ENCODE measurements at regions of chr6 and their contacts with region 1.

Region 1: DNA sequence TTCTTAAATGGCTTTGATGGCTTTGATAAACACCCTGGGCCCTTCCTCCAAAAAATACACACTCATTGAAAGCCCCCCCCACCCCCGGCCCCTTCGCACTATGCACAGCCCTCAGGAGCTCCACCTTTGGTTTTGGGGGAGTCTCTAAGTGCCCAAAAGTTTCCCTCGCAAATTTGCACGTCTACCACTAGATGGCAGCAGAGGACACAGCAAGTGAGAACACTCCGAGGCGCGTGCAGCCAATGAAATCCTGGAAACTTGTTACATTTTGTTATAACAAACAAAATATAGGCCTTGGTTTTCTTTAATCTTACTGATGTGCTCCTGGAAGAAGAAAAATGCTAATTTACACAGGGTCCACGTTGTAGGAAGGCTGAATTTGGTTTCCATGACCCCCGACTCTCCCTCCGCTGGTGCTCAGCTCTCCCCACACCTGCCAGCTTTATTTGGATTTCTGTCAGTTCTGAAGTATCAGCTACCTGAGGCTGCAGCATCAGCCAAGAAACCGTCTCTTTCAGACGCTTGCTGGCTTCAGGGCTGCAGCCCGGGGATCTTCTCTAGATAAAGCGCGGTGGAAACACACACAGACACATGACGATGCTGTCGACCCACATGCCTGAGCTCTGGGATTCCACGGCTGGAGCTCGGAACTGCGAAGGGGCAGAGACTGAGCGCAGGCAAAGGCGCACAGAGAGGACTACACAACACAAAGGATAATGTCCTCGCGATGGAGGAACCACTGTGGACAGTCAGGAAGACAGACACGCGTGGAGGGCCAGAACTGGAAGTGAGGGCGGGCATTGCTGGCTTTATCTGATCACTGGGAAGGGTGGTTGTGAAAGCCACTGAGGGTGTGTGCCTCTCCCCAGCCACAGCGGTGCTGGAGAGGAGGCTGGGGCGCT is 148.4 kb upstream of the RPS6KA2 start:
- DNase-seq: peak; percentile 51
- ATAC-seq: peak; percentile 85
- H3K4me3 ChIP-seq: no peak overlapping the region
- H3K27ac ChIP-seq: no peak overlapping the region
- H3K4me1 ChIP-seq: peaks cover 0 to 15% of the 10 kb centered on the region in 2 experiments; a peak in 1 of 4 replicates
- H3K27me3 ChIP-seq: no peaks in the 10 kb centered on the region
- CTCF ChIP-seq: peak; percentile 83 to 88 (median 86)
- POLR2A ChIP-seq: no peak
- RAD21 ChIP-seq: peak; percentile 92

Region 2: DNA sequence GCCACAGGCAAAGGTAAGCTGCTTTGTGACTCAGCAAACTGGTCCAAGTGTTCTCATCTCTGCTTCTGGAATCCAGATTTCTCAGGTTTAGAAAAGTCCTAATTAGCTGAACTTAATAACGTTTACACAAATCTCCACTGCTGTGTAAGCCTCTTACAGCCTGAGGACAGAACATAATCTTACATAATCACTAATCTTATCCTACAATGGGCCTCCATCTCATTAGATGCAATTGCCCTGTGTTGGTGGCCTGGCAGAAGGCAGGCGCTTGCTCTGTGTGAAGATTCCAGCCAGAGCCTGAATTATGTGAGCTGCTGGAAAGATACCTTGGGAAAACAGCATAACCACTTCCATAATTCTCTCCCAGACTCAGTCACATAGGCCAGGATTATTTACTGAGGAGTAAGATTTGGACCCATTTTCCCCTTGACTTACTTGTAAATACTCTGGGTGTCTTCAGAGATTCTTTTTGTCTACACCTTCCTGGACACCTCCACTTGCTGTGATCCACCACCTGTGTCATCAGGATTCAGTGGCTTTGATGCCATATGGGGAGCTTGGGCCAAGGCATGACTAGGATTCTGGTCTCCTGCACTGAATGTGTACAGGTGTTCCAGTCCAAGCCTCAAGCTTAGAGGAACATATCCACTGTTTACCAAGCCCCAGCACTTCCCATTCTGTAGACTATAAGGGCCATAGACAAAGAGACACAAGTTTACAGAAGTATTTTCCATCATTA is 1570.5 kb before region 1 on chr6:
- CTCF ChIA-PET with region 1: no interaction called
- POLR2A ChIA-PET with region 1: no interaction called
- RAD21 ChIA-PET with region 1: no interaction called
- intact Hi-C with region 1: no loop called
- DNase-seq: no peak
- ATAC-seq: no peak
- H3K4me3 ChIP-seq: no peak overlapping the region
- H3K27ac ChIP-seq: no peak overlapping the region
- H3K4me1 ChIP-seq: no peaks in the 10 kb centered on the region
- H3K27me3 ChIP-seq: no peaks in the 10 kb centered on the region
- CTCF ChIP-seq: no peak
- POLR2A ChIP-seq: no peak
- RAD21 ChIP-seq: no peak

Region 3: DNA sequence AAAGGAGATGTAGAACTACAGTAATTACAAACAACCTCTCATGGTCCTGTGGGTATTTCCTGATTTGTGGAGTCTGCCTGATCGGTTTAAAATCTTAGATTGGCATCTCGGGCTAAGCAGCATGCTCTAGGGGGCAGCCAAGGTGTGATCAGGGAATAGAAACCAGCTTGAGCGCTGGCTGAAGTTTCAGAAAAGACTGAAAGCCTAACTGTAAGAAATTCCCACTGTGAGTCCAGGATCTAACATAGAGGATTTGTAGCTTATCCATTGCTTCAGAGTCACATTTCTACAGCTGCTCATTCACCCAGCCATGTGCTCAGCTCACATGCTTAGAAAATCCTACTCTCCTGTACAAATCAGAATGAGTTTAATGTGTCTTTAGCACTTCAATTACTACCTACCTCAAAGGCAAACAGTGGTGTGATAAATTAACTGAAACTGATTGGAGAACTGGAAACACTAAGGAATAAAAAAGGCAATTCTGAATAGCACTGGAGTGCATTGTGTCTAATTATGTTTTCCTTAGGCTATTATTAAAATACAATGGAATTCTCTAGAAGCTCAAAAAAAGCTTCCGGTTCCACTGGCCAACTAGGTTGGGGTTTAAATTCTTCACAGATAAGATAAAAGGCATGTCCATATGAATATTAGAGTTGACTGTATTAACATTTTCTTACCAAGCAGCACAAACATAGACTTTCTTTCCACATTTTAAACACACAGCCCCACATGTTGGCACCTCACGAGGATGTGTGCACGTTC is 318.9 kb before region 1 on chr6:
- CTCF ChIA-PET with region 1: no interaction called
- POLR2A ChIA-PET with region 1: no interaction called
- RAD21 ChIA-PET with region 1: no interaction called
- intact Hi-C with region 1: loop called (anchors 10 kb)
- DNase-seq: no peak
- ATAC-seq: peak; percentile 74
- H3K4me3 ChIP-seq: no peak overlapping the region
- H3K27ac ChIP-seq: no peak overlapping the region
- H3K4me1 ChIP-seq: no peaks in the 10 kb centered on the region
- H3K27me3 ChIP-seq: no peaks in the 10 kb centered on the region
- CTCF ChIP-seq: peak; percentile 34 to 41 (median 40); a peak in 4 of 6 replicates
- POLR2A ChIP-seq: no peak
- RAD21 ChIP-seq: peak; percentile 68

Region 4: GRCh38 chr6:166515072-166515810 is 260.2 kb before region 1 on chr6:
- CTCF ChIA-PET with region 1: interaction called, 3 read pairs
- POLR2A ChIA-PET with region 1: no interaction called
- RAD21 ChIA-PET with region 1: no interaction called
- intact Hi-C with region 1: loop called (anchors 5 kb)
- DNase-seq: peak; percentile 55
- ATAC-seq: peak; percentile 82
- H3K4me3 ChIP-seq: no peak overlapping the region
- H3K27ac ChIP-seq: no peak overlapping the region
- H3K4me1 ChIP-seq: peaks cover 9 to 23% of the 10 kb centered on the region in 2 experiments
- H3K27me3 ChIP-seq: no peaks in the 10 kb centered on the region
- CTCF ChIP-seq: peak; percentile 48 to 57 (median 50); a peak in 5 of 6 replicates
- POLR2A ChIP-seq: no peak
- RAD21 ChIP-seq: peak; percentile 71

Region 5: GRCh38 chr6:166950443-166950821 is 175.0 kb after region 1 on chr6:
- CTCF ChIA-PET with region 1: interaction called, 21 read pairs
- POLR2A ChIA-PET with region 1: no interaction called
- RAD21 ChIA-PET with region 1: interaction called in 1 of 2 experiments, 6 read pairs
- intact Hi-C with region 1: loop called (anchors 1 kb)
- DNase-seq: no peak
- ATAC-seq: no peak
- H3K4me3 ChIP-seq: no peak overlapping the region
- H3K27ac ChIP-seq: no peak overlapping the region
- H3K4me1 ChIP-seq: peaks cover 0 to 10% of the 10 kb centered on the region in 2 experiments; a peak in 1 of 4 replicates
- H3K27me3 ChIP-seq: no peaks in the 10 kb centered on the region
- CTCF ChIP-seq: no peak
- POLR2A ChIP-seq: no peak
- RAD21 ChIP-seq: no peak

Region 6: GRCh38 chr6:166989427-166990032 is 214.1 kb after region 1 on chr6:
- CTCF ChIA-PET with region 1: interaction called, 25 read pairs
- POLR2A ChIA-PET with region 1: interaction called, 4 read pairs
- RAD21 ChIA-PET with region 1: interaction called, 4 to 6 read pairs
- intact Hi-C with region 1: loop called (anchors 2 kb)
- DNase-seq: no peak
- ATAC-seq: peak; percentile 82
- H3K4me3 ChIP-seq: no peak overlapping the region
- H3K27ac ChIP-seq: no peak overlapping the region
- H3K4me1 ChIP-seq: no peaks in the 10 kb centered on the region
- H3K27me3 ChIP-seq: no peaks in the 10 kb centered on the region
- CTCF ChIP-seq: peak; percentile 38 to 57 (median 48); a peak in 5 of 6 replicates
- POLR2A ChIP-seq: no peak
- RAD21 ChIP-seq: peak; percentile 67

Region 7: DNA sequence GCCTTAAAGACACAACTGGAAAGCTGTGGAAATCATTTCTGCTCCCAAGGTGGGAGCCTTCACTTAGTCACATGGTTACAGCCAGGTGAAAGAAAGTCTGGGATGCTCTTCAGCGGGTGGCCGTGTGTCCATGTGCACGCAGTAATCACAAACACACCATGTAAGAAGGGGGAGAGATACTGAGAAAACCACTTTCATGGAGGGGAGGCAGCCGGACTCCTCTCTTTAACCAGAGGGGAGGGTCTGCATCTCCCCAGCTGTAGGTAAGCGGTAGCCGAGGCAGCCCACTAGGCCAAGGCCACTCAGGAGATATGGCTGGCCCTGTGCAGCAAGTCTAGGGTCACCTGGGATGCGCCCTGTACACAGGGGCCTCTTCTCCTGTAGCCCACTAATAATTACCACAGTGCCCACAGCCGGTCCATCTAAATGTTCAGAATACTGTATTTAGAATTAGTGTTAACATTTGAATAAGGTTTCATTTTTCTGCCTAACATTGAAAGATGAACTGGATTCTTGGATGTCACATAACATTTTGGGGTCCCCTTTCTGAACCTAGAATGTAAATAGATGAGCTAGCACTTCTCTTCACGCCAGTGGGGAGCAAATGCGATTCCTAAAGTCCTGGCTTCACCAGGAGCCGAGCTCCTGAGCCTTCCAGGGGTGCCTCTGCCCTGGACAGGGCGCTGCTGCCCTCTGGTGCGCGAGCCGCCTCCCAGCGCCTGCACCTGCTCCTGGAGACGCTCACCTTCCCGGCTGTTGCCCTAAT is 366.4 kb after region 1 on chr6:
- CTCF ChIA-PET with region 1: interaction called, 28 read pairs
- POLR2A ChIA-PET with region 1: no interaction called
- RAD21 ChIA-PET with region 1: interaction called, 11 to 13 read pairs
- intact Hi-C with region 1: loop called (anchors 1 kb)
- DNase-seq: peak; percentile 24
- ATAC-seq: peak; percentile 99
- H3K4me3 ChIP-seq: no peak overlapping the region
- H3K27ac ChIP-seq: no peak overlapping the region
- H3K4me1 ChIP-seq: no peaks in the 10 kb centered on the region
- H3K27me3 ChIP-seq: peaks cover 5% of the 10 kb centered on the region; the same call in 1 of the 2 replicates
- CTCF ChIP-seq: peak; percentile 77 to 90 (median 88)
- POLR2A ChIP-seq: no peak
- RAD21 ChIP-seq: peak; percentile 96

Region 8: GRCh38 chr6:167285077-167285770 is 509.8 kb after region 1 on chr6:
- CTCF ChIA-PET with region 1: interaction called, 4 read pairs
- POLR2A ChIA-PET with region 1: no interaction called
- RAD21 ChIA-PET with region 1: no interaction called
- intact Hi-C with region 1: loop called (anchors 10 kb)
- DNase-seq: no peak
- ATAC-seq: no peak
- H3K4me3 ChIP-seq: no peak overlapping the region
- H3K27ac ChIP-seq: no peak overlapping the region
- H3K4me1 ChIP-seq: no peaks in the 10 kb centered on the region
- H3K27me3 ChIP-seq: peaks cover 7% of the 10 kb centered on the region; the same call in 1 of the 2 replicates
- CTCF ChIP-seq: no peak
- POLR2A ChIP-seq: no peak
- RAD21 ChIP-seq: no peak

Measured in HCT116 (cell line).